Activated CD8-positive, alpha-beta memory T cell treated with anti-CD3 and anti-CD28 coated beads, Interleukin-2, amount 10 ng/mL, durations not matched to agents 7 days and 5 days (primary cell): ENCODE measurements at regions of chr2 and their contacts with region 1.

Region 1: DNA sequence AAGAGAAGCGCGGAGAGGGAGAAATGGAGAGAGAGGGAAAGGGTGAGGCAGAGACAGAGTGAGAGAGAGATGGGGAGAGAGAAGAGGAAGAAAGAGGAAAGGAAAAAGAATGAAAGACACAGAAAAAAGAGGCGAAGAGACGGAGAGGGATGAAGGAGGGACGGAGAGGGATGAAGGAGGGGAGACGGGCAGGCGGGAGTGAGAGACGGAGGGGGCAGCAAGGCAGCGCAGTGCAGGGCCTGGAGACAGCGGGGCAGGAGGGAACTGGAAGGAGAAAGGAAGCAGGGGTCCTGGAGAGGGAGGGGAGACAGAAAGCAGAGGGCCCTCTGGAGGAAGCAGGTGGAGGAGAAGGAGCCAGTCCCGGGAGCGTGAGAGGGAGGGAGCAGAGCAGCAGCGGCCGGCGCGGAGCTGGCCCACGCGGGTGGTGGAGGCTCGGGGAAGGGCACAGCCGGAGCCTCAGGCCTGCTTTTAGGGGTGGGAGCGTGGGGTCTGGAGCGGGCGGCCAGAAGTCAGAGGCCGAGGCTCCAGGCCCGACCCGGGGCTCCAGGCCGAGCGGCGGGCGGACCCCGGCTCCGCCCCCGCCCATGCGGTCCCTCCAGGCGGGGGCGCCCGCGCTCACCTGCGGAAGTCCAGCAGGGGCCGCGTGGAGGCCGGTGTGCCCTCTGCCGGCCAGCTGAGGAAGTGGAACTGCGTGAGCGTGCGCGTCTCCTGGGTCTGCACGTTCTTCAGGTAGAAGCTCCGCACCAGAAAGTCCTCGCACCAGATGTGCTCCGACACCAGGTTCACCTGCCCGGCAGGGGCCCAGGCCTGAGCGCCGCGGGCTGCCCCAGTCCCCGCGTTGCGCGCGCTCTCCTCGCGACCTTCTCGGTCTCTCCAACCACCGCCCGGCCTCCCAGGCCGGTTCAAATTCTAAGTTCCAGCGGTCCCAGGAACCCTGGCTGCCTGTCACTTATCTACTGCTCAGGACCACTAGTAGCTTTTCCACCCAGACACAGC is 14.5 kb downstream of the PTPRN start:
- DNase-seq: peak; percentile 91
- ATAC-seq: peak; percentile 87
- H3K4me3 Mint-ChIP-seq: peak overlapping the region; percentile 70
- H3K27ac Mint-ChIP-seq: peak overlapping the region; percentile 63
- H3K4me1 Mint-ChIP-seq: peaks cover 15% of the 10 kb centered on the region
- H3K27me3 Mint-ChIP-seq: peaks cover 17% of the 10 kb centered on the region

Region 2: DNA sequence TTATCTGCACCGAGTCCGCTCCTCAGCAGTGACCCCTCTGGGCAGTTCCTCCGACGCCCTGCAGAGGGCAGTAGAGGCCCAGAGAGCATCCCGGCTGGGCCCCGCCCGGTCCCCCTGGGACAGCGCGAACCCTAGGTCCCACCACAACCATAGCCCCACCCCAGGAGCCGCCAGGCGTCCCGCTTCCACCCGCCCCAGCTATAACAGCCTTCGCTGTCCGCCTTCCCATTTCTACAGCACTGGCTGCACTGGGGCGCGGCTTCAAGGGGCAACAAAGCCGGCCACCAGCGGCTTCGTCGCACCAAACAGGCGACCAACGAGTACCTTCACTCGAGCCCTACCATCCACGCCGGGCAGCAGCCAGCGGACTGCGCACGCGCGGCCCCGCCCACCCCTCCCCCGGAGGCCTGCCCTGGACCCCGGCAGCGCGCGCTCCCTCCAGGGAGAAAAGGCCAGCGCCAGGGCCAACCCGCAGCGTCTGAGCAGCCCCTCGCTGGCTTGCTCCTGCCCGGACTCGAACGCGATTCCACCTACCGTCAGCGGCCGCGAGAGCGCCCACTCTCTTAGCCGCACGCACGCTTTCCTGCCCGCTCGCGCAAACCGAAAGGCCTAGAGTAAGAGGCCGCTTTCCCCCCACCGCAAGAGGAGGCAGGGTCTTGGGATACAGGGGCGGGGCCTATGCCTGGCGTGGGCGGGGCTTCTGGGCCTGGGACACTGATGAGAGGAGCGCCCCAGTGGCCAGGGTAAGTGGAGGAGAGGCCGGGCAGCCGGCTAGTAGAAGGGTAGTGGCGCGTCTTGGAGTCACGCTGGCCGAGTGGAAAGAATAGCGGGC is 134.3 kb before region 1 on chr2 and contains the start of gene NHEJ1:
- CTCF ChIA-PET with region 1: interaction called, 150 read pairs
- DNase-seq: peak; percentile 96
- ATAC-seq: peak; percentile 87
- H3K4me3 Mint-ChIP-seq: peak within 1 kb of the TSS; percentile 80
- H3K27ac Mint-ChIP-seq: peak within 1 kb of the TSS; percentile 93
- H3K4me1 Mint-ChIP-seq: peaks cover 19% of the 10 kb centered on the region
- H3K27me3 Mint-ChIP-seq: no peaks in the 10 kb centered on the region
- total RNA-seq, gene NHEJ1: 14.4 to 19.4 TPM

Region 3: GRCh38 chr2:219206442-219207253 is 88.0 kb before region 1 on chr2 and contains the start of gene ZFAND2B:
- CTCF ChIA-PET with region 1: interaction called, 19 read pairs
- DNase-seq: peak; percentile 96
- ATAC-seq: peak; percentile 95
- H3K4me3 Mint-ChIP-seq: peak within 1 kb of the TSS; percentile 81
- H3K27ac Mint-ChIP-seq: peak within 1 kb of the TSS; percentile 93
- H3K4me1 Mint-ChIP-seq: peaks cover 53% of the 10 kb centered on the region
- H3K27me3 Mint-ChIP-seq: no peaks in the 10 kb centered on the region
- total RNA-seq, gene ZFAND2B: 60.2 to 60.6 TPM

Region 4: GRCh38 chr2:219245148-219245898 is 49.3 kb before region 1 on chr2 and contains the starts of genes GLB1L and STK16:
- CTCF ChIA-PET with region 1: interaction called, 31 read pairs
- DNase-seq: peak; percentile 94
- ATAC-seq: peak; percentile 75
- H3K4me3 Mint-ChIP-seq: peak within 1 kb of the TSS; percentile 99
- H3K27ac Mint-ChIP-seq: peak within 1 kb of the TSS; percentile 100
- H3K4me1 Mint-ChIP-seq: peaks cover 61% of the 10 kb centered on the region
- H3K27me3 Mint-ChIP-seq: no peaks in the 10 kb centered on the region
- total RNA-seq, gene GLB1L: 4.3 to 4.9 TPM
- total RNA-seq, gene STK16: 37.3 to 41.7 TPM

Region 5: DNA sequence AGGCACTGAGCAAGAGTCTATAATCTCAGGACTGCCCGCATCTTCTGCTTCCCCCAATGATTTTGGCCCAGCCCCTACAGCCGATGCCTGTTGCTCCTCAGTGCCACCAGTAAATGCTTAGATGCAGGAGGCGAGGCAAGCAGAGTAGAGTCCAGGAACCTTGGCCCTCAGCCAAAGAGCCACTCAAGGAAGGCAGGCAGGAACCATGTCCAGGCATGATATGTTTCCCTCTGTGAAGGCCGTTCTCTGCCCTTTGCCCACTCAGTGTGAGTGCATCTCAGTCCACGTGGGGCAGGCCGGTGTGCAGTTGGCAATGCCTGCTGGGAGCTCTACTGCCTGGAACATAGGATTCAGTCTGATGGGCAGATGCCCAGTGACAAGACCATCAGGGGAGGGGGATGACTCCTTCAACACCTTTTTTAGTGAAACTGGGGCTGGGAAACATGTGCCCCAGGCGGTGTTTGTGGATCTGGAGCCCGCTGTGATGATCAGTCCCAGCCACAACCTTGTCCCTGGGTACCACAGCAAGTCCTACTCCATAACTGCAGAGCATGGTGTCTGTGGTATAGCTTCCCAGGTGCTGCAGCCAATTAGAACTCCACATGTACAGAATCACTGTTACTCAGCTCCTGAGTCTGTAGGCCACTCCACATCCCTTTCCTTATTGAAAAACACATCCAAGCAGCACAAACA is 25.1 kb before region 1 on chr2:
- CTCF ChIA-PET with region 1: interaction called, 260 read pairs
- DNase-seq: no peak
- ATAC-seq: no peak
- H3K4me3 Mint-ChIP-seq: no peak overlapping the region
- H3K27ac Mint-ChIP-seq: no peak overlapping the region
- H3K4me1 Mint-ChIP-seq: no peaks in the 10 kb centered on the region
- H3K27me3 Mint-ChIP-seq: peaks cover 2% of the 10 kb centered on the region